ENCODE measurements at regions of chr14 and their contacts with region 1.

Region 1: GRCh38 chr14:74217672-74218448 is 21.4 kb upstream of the VSX2 start:
- DNase-seq: peak; percentile 87
- ATAC-seq: peak; percentile 98
- H3K4me3 Mint-ChIP-seq: no peak overlapping the region
- H3K27ac Mint-ChIP-seq: no peak overlapping the region
- H3K4me1 Mint-ChIP-seq: peaks cover 3% of the 10 kb centered on the region
- H3K27me3 Mint-ChIP-seq: peaks cover 7% of the 10 kb centered on the region

Region 2: GRCh38 chr14:74109369-74109768 is 108.5 kb before region 1 on chr14:
- CTCF ChIA-PET with region 1: interaction called, 4 read pairs
- POLR2A ChIA-PET with region 1: no interaction called
- intact Hi-C with region 1: loop called in 1 of 2 experiments (anchors 2 kb)
- DNase-seq: no peak
- ATAC-seq: no peak
- H3K4me3 Mint-ChIP-seq: no peak overlapping the region
- H3K27ac Mint-ChIP-seq: no peak overlapping the region
- H3K4me1 Mint-ChIP-seq: no peaks in the 10 kb centered on the region
- H3K27me3 Mint-ChIP-seq: no peaks in the 10 kb centered on the region

Region 3: GRCh38 chr14:74249433-74250375 is 31.8 kb after region 1 on chr14:
- CTCF ChIA-PET with region 1: interaction called, 6 read pairs
- POLR2A ChIA-PET with region 1: no interaction called
- intact Hi-C with region 1: loop called (anchors 1 kb)
- DNase-seq: no peak
- ATAC-seq: no peak
- H3K4me3 Mint-ChIP-seq: no peak overlapping the region
- H3K27ac Mint-ChIP-seq: no peak overlapping the region
- H3K4me1 Mint-ChIP-seq: peaks cover 7% of the 10 kb centered on the region
- H3K27me3 Mint-ChIP-seq: peaks cover 36% of the 10 kb centered on the region

Region 4: GRCh38 chr14:74257078-74257989 is 39.5 kb after region 1 on chr14:
- CTCF ChIA-PET with region 1: interaction called, 6 read pairs
- POLR2A ChIA-PET with region 1: no interaction called
- intact Hi-C with region 1: loop called in 1 of 2 experiments (anchors 1 kb)
- DNase-seq: peak; percentile 77
- ATAC-seq: peak; percentile 89
- H3K4me3 Mint-ChIP-seq: peak overlapping the region; percentile 69
- H3K27ac Mint-ChIP-seq: peak overlapping the region; percentile 42
- H3K4me1 Mint-ChIP-seq: peaks cover 7% of the 10 kb centered on the region
- H3K27me3 Mint-ChIP-seq: peaks cover 3% of the 10 kb centered on the region

Measured in activated CD4-positive, alpha-beta T cell treated with anti-CD3 and anti-CD28 coated beads for 36 hours (primary cell).